HEK293T (cell line): ENCODE measurements at regions of chr12 and their contacts with region 1.

Region 1: DNA sequence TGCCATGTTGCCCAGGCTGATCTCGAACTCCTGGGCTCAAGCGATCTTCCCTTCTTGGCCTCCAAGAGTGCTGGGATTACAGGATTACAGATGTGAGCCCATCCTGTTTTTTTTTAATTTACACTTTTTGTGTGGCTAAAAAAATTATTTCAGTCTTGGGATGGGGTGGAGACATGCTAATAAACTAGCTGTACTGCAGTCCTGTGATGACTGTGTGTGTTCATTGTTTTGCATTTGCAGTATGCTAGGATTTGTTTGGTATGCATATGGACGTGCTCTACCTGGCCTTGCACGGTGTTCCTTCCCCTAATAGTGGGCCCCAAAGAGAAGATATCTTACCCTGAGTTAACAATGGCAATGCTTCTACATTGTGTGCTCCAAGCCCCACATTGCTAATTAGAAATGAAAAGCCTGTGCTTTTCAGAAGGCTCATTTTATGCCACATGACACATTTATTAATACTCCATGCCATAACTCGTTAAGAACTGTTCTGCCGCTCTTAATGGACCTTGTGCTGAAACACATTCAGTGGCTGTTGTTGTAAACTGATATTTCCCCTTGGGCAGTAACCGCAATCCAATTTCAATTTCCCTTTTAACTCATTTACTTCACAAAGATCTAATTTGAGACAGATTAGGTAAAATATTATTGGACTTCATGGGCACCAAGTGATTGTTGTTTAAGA is 86.4 kb downstream of the SCN8A start:
- DNase-seq: no peak

Region 2: DNA sequence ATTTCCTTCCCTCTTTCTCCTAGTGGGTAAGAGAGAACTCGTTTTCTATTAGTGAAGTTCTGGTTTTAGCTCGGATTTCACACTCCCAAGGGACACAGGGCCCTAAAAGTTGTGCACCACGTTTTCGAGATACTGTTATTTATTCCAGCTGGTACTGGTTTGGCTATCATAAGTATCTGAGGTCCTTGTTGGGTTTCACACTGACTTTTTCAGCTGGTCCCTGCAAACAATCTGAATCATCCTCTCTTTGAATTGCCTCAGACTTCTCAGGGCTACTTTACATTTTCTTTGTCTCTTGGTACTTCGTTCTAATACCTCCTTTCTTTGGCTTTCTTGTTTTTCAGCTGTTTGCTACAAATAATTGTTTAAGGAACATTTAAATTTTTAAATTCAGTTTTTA is 10.7 kb before region 1 on chr12:
- CTCF ChIA-PET with region 1: interaction called, 10 read pairs
- POLR2A ChIA-PET with region 1: no interaction called
- DNase-seq: no peak